ENCODE measurements at regions of chr15 and their contacts with region 1.

Region 1: GRCh38 chr15:78299101-78299930 is at the start of gene SKIC8:
- DNase-seq: peak; percentile 95
- ATAC-seq: peak; percentile 98
- H3K4me3 Mint-ChIP-seq: peak within 1 kb of the TSS; percentile 99
- H3K27ac Mint-ChIP-seq: peak within 1 kb of the TSS; percentile 95
- H3K4me1 Mint-ChIP-seq: peaks cover 18% of the 10 kb centered on the region
- H3K27me3 Mint-ChIP-seq: no peaks in the 10 kb centered on the region
- total RNA-seq, gene SKIC8: 42.4 to 46.4 TPM

Region 2: GRCh38 chr15:78264304-78265136 is 34.8 kb before region 1 on chr15 and contains the start of gene DNAJA4:
- POLR2A ChIA-PET with region 1: interaction called, 33 read pairs
- DNase-seq: peak; percentile 77
- ATAC-seq: peak; percentile 82
- H3K4me3 Mint-ChIP-seq: peak within 1 kb of the TSS; percentile 88
- H3K27ac Mint-ChIP-seq: peak within 1 kb of the TSS; percentile 89
- H3K4me1 Mint-ChIP-seq: peaks cover 24% of the 10 kb centered on the region
- H3K27me3 Mint-ChIP-seq: no peaks in the 10 kb centered on the region
- total RNA-seq, gene DNAJA4: 26.0 to 28.5 TPM

Region 3: DNA sequence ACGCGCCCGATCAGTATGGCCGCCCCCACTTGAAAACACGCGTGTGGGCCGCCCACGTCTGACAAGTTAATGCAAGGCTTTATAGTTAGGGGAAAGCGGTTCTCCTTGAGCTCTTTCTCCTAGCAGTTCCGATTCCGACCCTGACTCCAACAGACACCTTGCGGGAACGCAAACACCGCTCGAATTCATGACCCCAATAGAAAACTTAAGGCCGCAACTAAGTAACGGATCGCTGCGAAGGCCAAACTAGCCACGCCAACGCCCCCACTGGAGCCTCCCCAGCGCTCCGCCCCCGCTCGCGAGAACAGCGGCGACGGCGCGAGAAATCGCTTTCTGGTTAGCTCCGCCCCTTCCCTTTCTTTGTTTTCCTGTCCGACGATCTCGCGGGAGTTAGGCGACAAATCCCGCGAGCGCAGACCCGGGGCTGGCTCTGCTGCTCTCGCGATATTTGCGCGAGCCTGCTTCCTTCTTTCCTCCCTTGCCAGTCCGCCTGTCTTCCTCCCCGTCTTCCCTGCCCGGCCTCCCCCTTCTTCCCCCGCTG is 138.5 kb after region 1 on chr15 and contains the start of gene IREB2:
- POLR2A ChIA-PET with region 1: interaction called, 19 read pairs
- DNase-seq: peak; percentile 98
- ATAC-seq: peak; percentile 84
- H3K4me3 Mint-ChIP-seq: peak within 1 kb of the TSS; percentile 96
- H3K27ac Mint-ChIP-seq: peak within 1 kb of the TSS; percentile 96
- H3K4me1 Mint-ChIP-seq: peaks cover 38% of the 10 kb centered on the region
- H3K27me3 Mint-ChIP-seq: peaks cover 3% of the 10 kb centered on the region
- total RNA-seq, gene IREB2: 60.6 to 61.4 TPM